CD8-positive, alpha-beta T cell (primary cell): ENCODE measurements at regions of chr17 and their contacts with region 1.

Region 1: GRCh38 chr17:5191541-5192417 is at the start of gene ZNF594:
- DNase-seq: peak; percentile 96 to 99 (median 98)
- ATAC-seq: peak; percentile 99
- H3K4me3 ChIP-seq: peak within 1 kb of the TSS; percentile 79 to 91
- H3K4me3 Mint-ChIP-seq: peak within 1 kb of the TSS; percentile 93
- H3K27ac ChIP-seq: peak within 1 kb of the TSS; percentile 77 to 88
- H3K27ac Mint-ChIP-seq: peak within 1 kb of the TSS; percentile 93
- H3K4me1 ChIP-seq: peaks cover 21% of the 10 kb centered on the region
- H3K4me1 Mint-ChIP-seq: peaks cover 31% of the 10 kb centered on the region
- H3K27me3 ChIP-seq: no peaks in the 10 kb centered on the region
- H3K27me3 Mint-ChIP-seq: no peaks in the 10 kb centered on the region
- CTCF ChIP-seq: peak; percentile 68
- total RNA-seq, gene ZNF594: 3.2 to 3.3 TPM

Region 2: GRCh38 chr17:4143563-4144421 is 1048.0 kb before region 1 on chr17:
- CTCF ChIA-PET with region 1: no interaction called
- POLR2A ChIA-PET with region 1: no interaction called
- intact Hi-C with region 1: loop called in 1 of 2 experiments (anchors 5 kb)
- DNase-seq: peak; percentile 81 to 98 (median 91)
- ATAC-seq: peak; percentile 63
- H3K4me3 ChIP-seq: peak overlapping the region; percentile 72 to 88
- H3K4me3 Mint-ChIP-seq: peak overlapping the region; percentile 99
- H3K27ac ChIP-seq: peak overlapping the region; percentile 98
- H3K27ac Mint-ChIP-seq: peak overlapping the region; percentile 100
- H3K4me1 ChIP-seq: peaks cover 42% of the 10 kb centered on the region
- H3K4me1 Mint-ChIP-seq: peaks cover 43% of the 10 kb centered on the region
- H3K27me3 ChIP-seq: no peaks in the 10 kb centered on the region
- H3K27me3 Mint-ChIP-seq: no peaks in the 10 kb centered on the region
- CTCF ChIP-seq: no peak

Region 3: GRCh38 chr17:5097101-5097834 is 94.5 kb before region 1 on chr17:
- CTCF ChIA-PET with region 1: interaction called, 4 read pairs
- POLR2A ChIA-PET with region 1: no interaction called
- intact Hi-C with region 1: loop called in 1 of 2 experiments (anchors 5 kb)
- DNase-seq: peak in 8 of 9 experiments; percentile 36 to 74 (median 61)
- ATAC-seq: peak; percentile 93
- H3K4me3 ChIP-seq: peak overlapping the region; percentile 51 to 56
- H3K4me3 Mint-ChIP-seq: peak overlapping the region; percentile 89
- H3K27ac ChIP-seq: no peak overlapping the region
- H3K27ac Mint-ChIP-seq: peak overlapping the region; percentile 84
- H3K4me1 ChIP-seq: peaks cover 4% of the 10 kb centered on the region
- H3K4me1 Mint-ChIP-seq: peaks cover 10% of the 10 kb centered on the region
- H3K27me3 ChIP-seq: peaks cover 0 to 8% of the 10 kb centered on the region in 2 experiments
- H3K27me3 Mint-ChIP-seq: peaks cover 6% of the 10 kb centered on the region
- CTCF ChIP-seq: no peak

Region 4: DNA sequence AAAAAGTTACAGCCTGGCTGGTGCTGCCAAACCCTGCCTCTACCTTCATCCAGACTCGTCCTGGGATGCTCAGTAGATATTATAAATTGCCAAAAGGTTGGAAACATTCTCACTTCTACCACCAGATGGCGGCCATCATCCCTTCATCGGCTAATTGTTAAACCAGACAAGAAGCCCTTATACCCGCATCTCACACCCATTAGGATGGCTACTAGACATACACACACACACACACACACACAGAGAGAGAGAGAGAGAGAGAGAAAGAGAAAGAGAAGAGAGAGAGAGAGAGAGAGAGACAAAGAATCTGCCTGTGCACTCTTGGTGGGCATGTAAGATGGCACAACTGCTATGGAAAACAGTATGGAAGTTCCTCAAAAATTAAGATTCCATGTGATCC is 57.8 kb after region 1 on chr17:
- CTCF ChIA-PET with region 1: interaction called, 18 read pairs
- POLR2A ChIA-PET with region 1: no interaction called
- intact Hi-C with region 1: loop called in 1 of 2 experiments (anchors 5 kb)
- DNase-seq: peak; percentile 30 to 87 (median 64)
- ATAC-seq: peak; percentile 97
- H3K4me3 ChIP-seq: no peak overlapping the region
- H3K4me3 Mint-ChIP-seq: no peak overlapping the region
- H3K27ac ChIP-seq: no peak overlapping the region
- H3K27ac Mint-ChIP-seq: peak overlapping the region; percentile 76
- H3K4me1 ChIP-seq: peaks cover 2% of the 10 kb centered on the region
- H3K4me1 Mint-ChIP-seq: peaks cover 10% of the 10 kb centered on the region
- H3K27me3 ChIP-seq: no peaks in the 10 kb centered on the region
- H3K27me3 Mint-ChIP-seq: no peaks in the 10 kb centered on the region
- CTCF ChIP-seq: peak; percentile 60

Region 5: GRCh38 chr17:5260554-5260953 is 68.8 kb after region 1 on chr17:
- CTCF ChIA-PET with region 1: no interaction called
- POLR2A ChIA-PET with region 1: no interaction called
- intact Hi-C with region 1: no loop called
- DNase-seq: no peak
- ATAC-seq: no peak
- H3K4me3 ChIP-seq: no peak overlapping the region
- H3K4me3 Mint-ChIP-seq: no peak overlapping the region
- H3K27ac ChIP-seq: no peak overlapping the region
- H3K27ac Mint-ChIP-seq: no peak overlapping the region
- H3K4me1 ChIP-seq: no peaks in the 10 kb centered on the region
- H3K4me1 Mint-ChIP-seq: peaks cover 1% of the 10 kb centered on the region
- H3K27me3 ChIP-seq: no peaks in the 10 kb centered on the region
- H3K27me3 Mint-ChIP-seq: no peaks in the 10 kb centered on the region
- CTCF ChIP-seq: no peak

Region 6: GRCh38 chr17:5438716-5439445 is 247.1 kb after region 1 on chr17 and contains the start of gene C1QBP:
- CTCF ChIA-PET with region 1: interaction called, 6 read pairs
- POLR2A ChIA-PET with region 1: interaction called, 6 read pairs
- intact Hi-C with region 1: loop called in 1 of 2 experiments (anchors 1 kb)
- DNase-seq: peak; percentile 87 to 96 (median 91)
- ATAC-seq: peak; percentile 92
- H3K4me3 ChIP-seq: peak within 1 kb of the TSS; percentile 56 to 83
- H3K4me3 Mint-ChIP-seq: peak within 1 kb of the TSS; percentile 81
- H3K27ac ChIP-seq: peak within 1 kb of the TSS; percentile 63 to 86
- H3K27ac Mint-ChIP-seq: peak within 1 kb of the TSS; percentile 93
- H3K4me1 ChIP-seq: peaks cover 30% of the 10 kb centered on the region
- H3K4me1 Mint-ChIP-seq: peaks cover 40% of the 10 kb centered on the region
- H3K27me3 ChIP-seq: no peaks in the 10 kb centered on the region
- H3K27me3 Mint-ChIP-seq: no peaks in the 10 kb centered on the region
- CTCF ChIP-seq: peak; percentile 98
- total RNA-seq, gene C1QBP: 72.0 to 79.9 TPM

Region 7: GRCh38 chr17:5584383-5585286 is 392.9 kb after region 1 on chr17 and contains the start of gene NLRP1:
- CTCF ChIA-PET with region 1: no interaction called
- POLR2A ChIA-PET with region 1: no interaction called
- intact Hi-C with region 1: loop called in 1 of 2 experiments (anchors 10 kb)
- DNase-seq: peak; percentile 89 to 98 (median 95)
- ATAC-seq: peak; percentile 90
- H3K4me3 ChIP-seq: peak within 1 kb of the TSS; percentile 82 to 87
- H3K4me3 Mint-ChIP-seq: peak within 1 kb of the TSS; percentile 97
- H3K27ac ChIP-seq: peak within 1 kb of the TSS; percentile 93 to 98
- H3K27ac Mint-ChIP-seq: peak within 1 kb of the TSS; percentile 99
- H3K4me1 ChIP-seq: peaks cover 66% of the 10 kb centered on the region
- H3K4me1 Mint-ChIP-seq: peaks cover 68% of the 10 kb centered on the region
- H3K27me3 ChIP-seq: no peaks in the 10 kb centered on the region
- H3K27me3 Mint-ChIP-seq: no peaks in the 10 kb centered on the region
- CTCF ChIP-seq: no peak
- total RNA-seq, gene NLRP1: 231 to 241 TPM